GM10248 (cell line): ENCODE measurements at regions of chr1 and their contacts with region 1.

Region 1: DNA sequence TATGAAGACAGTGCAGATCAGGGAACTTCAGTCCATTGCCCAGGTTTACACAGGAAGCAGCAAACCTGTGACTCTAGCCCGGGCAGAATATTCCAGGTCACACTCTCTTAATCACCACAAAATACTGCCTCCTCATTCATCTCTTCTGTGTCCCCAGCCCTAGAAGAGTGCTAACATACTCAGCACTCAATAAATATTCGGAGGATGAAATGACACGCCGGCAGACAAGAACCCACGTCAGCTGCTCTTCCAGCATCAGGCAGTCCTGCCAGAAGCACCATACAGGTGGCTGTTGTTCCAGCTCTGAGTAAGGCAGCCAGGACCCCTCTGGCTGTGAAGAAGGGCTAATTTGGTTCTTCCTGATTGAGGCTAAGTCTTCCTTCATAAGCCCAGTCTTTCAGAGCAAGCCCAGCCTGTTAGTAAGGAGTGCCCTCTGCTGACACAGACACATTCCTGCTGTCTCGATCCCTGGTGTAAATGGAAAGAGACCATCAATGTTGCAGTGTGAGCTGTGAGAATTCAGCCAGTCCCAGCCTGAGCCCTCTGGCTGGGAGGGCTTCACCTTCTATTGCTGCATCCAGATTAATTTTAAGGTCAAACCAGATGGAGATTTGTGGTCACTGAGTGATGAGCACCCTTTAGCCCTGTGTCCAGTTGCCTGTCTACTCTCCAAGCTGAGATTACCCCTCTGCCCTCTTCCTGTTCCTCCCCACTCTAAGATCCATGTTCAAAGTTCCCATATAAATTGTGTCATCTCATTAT is 45.0 kb upstream of the KIRREL1 start:
- DNase-seq: peak; percentile 41
- CTCF ChIP-seq: peak; percentile 54

Region 2: GRCh38 chr1:157849229-157849875 is 99.1 kb before region 1 on chr1:
- CTCF ChIA-PET with region 1: no interaction called
- POLR2A ChIA-PET with region 1: no interaction called
- DNase-seq: peak; percentile 52
- CTCF ChIP-seq: no peak

Region 3: GRCh38 chr1:157878059-157878458 is 70.4 kb before region 1 on chr1:
- CTCF ChIA-PET with region 1: interaction called, 12 read pairs
- POLR2A ChIA-PET with region 1: no interaction called
- DNase-seq: peak; percentile 13
- CTCF ChIP-seq: peak; percentile 19

Region 4: GRCh38 chr1:157963713-157964112 is 15.2 kb after region 1 on chr1:
- CTCF ChIA-PET with region 1: interaction called, 12 read pairs
- POLR2A ChIA-PET with region 1: no interaction called
- DNase-seq: peak; percentile 65
- CTCF ChIP-seq: peak; percentile 85

Region 5: DNA sequence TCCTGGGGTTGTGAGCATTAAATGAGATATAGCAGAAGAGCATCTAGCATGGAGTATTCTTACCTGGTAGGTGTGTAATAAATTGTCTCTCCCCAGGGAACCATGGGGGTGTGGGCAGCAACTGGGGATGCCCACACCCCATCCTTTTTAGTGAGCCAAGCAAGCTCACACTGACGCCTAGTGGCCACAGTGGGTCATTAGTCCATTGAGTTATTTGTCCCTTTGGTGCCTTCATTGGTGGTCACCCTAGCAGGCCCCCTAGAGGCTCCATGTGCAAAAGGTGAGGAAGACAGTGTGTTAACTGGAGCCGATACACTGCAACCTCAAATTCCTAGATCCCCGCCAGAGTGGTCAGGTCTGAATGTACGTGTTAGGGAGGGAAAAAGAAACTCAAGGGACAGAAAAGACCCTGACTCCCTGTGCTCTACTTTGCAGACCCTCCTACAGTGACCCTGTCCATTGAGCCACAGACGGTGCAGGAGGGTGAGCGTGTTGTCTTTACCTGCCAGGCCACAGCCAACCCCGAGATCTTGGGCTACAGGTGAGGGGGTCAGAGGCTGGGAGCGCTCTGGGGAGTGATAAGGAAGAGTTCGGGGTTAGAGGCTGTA is 138.9 kb after region 1 on chr1:
- CTCF ChIA-PET with region 1: no interaction called
- POLR2A ChIA-PET with region 1: no interaction called
- DNase-seq: peak; percentile 75
- CTCF ChIP-seq: peak; percentile 74